Gastrocnemius medialis (tissue), 4 donors: ENCODE measurements at regions of chr4 and their contacts with region 1.

Region 1: DNA sequence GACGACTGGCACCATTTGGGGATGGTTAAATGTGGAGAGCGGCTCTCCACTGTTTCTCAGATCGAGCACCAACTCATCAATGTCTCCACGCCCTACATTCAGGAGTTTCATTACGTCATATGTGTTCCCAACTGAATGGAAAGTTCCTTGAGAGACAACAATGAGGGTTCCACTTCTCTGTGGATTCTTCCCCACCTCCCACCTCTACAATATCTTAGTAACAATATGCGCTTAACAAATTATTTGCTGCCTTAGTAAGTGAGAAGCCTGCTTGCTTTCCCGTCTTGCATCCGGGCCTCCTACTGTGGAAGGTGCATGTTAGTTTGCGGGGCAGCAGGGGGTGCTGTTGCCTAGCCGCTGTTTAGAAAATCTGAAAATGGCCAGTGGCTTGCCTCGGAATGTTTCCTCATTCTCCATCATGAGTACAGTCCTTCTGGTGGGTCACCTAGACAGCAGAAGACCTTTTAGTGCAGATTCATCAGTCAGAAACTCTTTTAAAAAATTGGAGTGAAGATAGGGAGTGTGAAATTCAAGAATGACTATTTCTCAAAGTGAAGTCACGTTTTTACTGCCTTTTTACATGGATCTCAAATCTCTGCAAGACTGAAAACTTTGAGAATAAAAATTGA is 55.7 kb downstream of the PHOX2B start:
- DNase-seq: peak in 1 of 2 donors; percentile 15
- ATAC-seq: peak in 1 of 2 donors; percentile 18
- H3K4me3 ChIP-seq: no peak overlapping the region
- H3K27ac ChIP-seq: no peak overlapping the region
- H3K4me1 ChIP-seq: no peaks in the 10 kb centered on the region
- H3K27me3 ChIP-seq: no peaks in the 10 kb centered on the region
- CTCF ChIP-seq: peak in 4 of 5 experiments; percentile 45 to 68 (median 58)
- POLR2A ChIP-seq: no peak

Region 2: DNA sequence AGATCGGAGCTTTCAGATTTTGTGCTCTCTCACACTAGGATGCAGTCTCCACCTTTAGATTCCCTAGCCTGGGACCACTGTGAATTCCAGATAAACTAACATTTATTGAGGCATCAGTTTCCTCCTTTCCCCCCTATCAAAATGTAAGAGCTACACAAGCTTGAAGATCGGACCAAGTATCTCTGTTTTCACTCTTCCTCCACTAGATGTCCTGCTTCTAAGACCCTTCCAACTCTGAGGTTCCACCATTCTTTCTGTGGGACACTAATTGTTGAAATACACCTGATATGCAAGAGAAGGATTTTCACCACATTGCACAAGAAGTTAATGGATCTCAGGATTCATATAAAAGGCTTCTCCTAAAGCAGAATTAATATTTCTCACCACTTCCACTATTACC is 98.7 kb after region 1 on chr4:
- in situ Hi-C with region 1: no loop called
- intact Hi-C with region 1: no loop called
- DNase-seq: no peak
- ATAC-seq: no peak
- H3K4me3 ChIP-seq: no peak overlapping the region
- H3K27ac ChIP-seq: no peak overlapping the region
- H3K4me1 ChIP-seq: no peaks in the 10 kb centered on the region
- H3K27me3 ChIP-seq: peaks cover 0 to 7% (median 0%) of the 10 kb centered on the region in 3 donors
- CTCF ChIP-seq: no peak
- POLR2A ChIP-seq: no peak

Region 3: DNA sequence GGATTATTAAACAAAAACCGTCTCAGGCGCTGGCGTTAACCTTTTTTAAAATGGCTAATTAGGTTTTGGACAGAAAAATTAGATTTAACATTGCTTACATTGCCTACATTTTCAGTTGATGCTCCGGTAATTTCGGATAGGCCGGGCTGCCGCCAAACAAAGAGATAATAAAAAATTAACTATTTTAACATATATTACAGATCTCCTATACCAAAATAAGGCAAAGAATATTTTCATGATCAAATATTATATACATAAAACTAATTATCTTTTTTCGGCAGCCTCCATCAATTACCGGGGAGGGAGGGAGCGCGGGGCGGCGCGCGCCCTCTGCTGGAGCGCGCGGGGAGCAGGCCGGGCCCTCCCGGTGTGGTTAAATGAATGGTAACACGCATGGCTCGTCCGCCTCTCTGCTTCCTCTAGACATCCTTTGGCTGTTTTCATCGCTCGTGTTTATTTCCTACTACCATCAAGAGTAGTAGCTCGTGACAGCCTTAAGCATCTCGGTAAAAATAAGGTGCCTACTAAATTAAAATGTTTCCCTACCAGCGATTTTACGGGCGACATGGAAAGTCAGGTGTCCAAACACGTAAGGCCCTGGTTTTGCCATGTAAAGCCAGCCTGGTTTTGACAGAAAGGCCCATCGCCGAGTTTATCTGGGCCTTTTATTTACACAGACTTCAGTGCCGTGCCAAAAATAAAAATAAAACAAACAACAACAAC is 190.0 kb after region 1 on chr4:
- in situ Hi-C with region 1: loop called (anchors 10 kb)
- intact Hi-C with region 1: loop called (anchors 1 kb)
- DNase-seq: no peak
- ATAC-seq: peak in 1 of 2 donors; percentile 58
- H3K4me3 ChIP-seq: peak overlapping the region; percentile 49 to 69 (median 50)
- H3K27ac ChIP-seq: no peak overlapping the region
- H3K4me1 ChIP-seq: peaks cover 19 to 27% of the 10 kb centered on the region in 2 donors
- H3K27me3 ChIP-seq: peaks cover 49 to 52% (median 49%) of the 10 kb centered on the region in 3 donors
- CTCF ChIP-seq: peak; percentile 53 to 94 (median 64)
- POLR2A ChIP-seq: no peak

Region 4: GRCh38 chr4:41887821-41888686 is 195.2 kb after region 1 on chr4:
- in situ Hi-C with region 1: loop called (anchors 10 kb)
- intact Hi-C with region 1: loop called (anchors 1 kb)
- DNase-seq: no peak
- ATAC-seq: no peak
- H3K4me3 ChIP-seq: no peak overlapping the region
- H3K27ac ChIP-seq: no peak overlapping the region
- H3K4me1 ChIP-seq: no peaks in the 10 kb centered on the region
- H3K27me3 ChIP-seq: peaks cover 0 to 2% (median 0%) of the 10 kb centered on the region in 3 donors
- CTCF ChIP-seq: peak; percentile 39 to 83 (median 56)
- POLR2A ChIP-seq: no peak